ENCODE measurements at regions of chr13 and their contacts with region 1.

Region 1: DNA sequence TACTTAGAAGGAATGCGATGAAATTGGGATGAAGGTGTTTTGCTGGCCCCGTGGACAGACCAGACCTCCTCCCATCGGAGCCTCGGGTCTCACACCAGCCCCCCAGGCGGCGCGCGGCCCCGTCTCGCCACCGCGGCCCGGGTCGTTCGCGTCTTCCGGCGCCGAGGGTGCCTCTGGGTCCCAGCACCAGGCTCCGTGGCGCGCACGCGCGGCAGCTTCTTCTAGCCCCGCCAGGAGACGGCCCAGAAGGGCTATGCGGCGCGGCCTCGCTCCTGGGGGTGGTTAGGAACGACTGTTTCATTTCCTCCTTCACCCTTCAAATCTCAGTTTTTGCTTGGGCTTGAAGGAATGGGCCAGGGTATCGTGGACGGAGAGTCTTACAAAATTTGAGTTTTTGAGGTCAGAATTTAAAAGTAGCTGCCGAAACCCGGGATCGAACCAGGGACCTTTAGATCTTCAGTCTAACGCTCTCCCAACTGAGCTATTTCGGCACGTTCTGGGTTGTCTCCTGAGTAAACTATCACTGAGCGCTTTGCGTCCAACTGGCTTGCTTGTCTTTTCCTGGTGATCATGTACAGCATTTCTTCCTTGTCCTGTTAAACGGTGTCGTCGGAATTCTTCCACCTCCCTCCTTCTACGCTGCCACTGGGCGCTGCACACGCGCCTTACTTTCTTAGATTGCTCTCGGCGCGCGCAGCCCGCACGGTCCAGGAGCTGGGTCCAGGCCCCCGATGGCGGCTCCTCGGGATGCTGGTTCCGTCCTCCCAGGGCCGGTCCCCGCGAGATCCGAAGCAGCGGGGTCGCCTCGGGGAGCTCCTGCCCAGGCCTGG is 46.5 kb downstream of the TGDS start:
- DNase-seq: peak; percentile 96
- H3K4me3 Mint-ChIP-seq: peak overlapping the region; percentile 82
- H3K27ac Mint-ChIP-seq: peak overlapping the region; percentile 84
- H3K4me1 Mint-ChIP-seq: peaks cover 18% of the 10 kb centered on the region
- H3K27me3 Mint-ChIP-seq: peaks cover 8% of the 10 kb centered on the region

Region 2: GRCh38 chr13:94435604-94436226 is 113.7 kb before region 1 on chr13:
- intact Hi-C with region 1: loop called (anchors 5 kb)
- DNase-seq: peak; percentile 63
- H3K4me3 Mint-ChIP-seq: no peak overlapping the region
- H3K27ac Mint-ChIP-seq: no peak overlapping the region
- H3K4me1 Mint-ChIP-seq: peaks cover 9% of the 10 kb centered on the region
- H3K27me3 Mint-ChIP-seq: peaks cover 6% of the 10 kb centered on the region

Region 3: DNA sequence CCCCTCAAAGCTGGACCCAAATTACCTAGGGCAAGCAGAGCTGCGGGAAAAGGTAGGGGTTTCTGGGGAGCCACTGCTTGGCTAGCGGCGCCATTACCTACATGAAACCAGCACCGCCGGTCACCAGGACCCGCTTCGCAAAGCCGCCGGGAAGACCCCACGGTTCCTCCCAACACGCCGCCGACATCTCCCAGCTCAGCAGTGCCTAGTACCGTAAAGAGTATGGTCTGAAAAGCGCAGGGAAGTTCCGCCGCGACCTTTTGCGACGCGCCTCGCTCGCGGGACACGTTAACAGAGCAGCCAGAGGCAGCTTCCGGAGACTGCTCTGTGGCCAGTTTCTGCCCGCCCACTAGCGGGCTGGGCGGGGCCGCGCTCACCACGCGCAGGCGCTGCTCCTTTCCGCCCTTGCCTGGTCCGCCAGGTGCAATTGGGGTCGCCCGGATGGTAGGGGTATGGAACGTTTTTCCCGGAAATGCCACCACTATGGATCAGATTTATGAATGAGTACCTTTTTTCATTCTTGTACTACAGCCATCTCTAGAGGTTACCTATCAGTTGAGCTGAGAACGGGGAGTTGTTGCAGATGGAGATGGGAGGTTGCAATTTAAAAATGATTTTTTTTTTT is 46.6 kb after region 1 on chr13 and contains the start of gene TGDS:
- intact Hi-C with region 1: loop called (anchors 1 kb)
- DNase-seq: peak; percentile 97
- H3K4me3 Mint-ChIP-seq: peak within 1 kb of the TSS; percentile 93
- H3K27ac Mint-ChIP-seq: peak within 1 kb of the TSS; percentile 97
- H3K4me1 Mint-ChIP-seq: peaks cover 34% of the 10 kb centered on the region
- H3K27me3 Mint-ChIP-seq: no peaks in the 10 kb centered on the region
- total RNA-seq, gene TGDS: 27.5 and 31.0 TPM in 2 replicates

Region 4: DNA sequence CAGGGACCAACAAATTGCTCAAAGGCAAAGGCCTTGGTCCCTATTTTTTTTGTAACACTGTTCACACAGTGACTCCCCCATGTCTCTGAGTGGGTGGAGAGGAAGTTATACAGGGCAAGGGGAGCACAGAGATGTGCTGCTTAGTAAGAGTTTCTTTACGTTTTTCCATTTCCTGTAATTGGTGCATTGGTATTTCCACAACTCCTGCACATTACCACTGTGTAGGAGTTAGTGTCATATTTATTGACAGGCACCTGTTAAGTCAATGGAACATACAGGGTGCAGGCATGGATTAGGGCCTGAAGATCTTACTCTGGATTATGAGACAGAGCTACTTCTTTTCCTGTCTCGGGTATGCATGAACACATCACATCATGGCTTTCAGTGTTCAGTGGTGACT is 117.7 kb after region 1 on chr13:
- intact Hi-C with region 1: loop called (anchors 2 kb)
- DNase-seq: peak; percentile 59
- H3K4me3 Mint-ChIP-seq: peak overlapping the region; percentile 39
- H3K27ac Mint-ChIP-seq: peak overlapping the region; percentile 92
- H3K4me1 Mint-ChIP-seq: peaks cover 32% of the 10 kb centered on the region
- H3K27me3 Mint-ChIP-seq: peaks cover 13% of the 10 kb centered on the region